ENCODE measurements at regions of chrX and their contacts with region 1.

Region 1: GRCh38 chrX:29662759-29663503 is 552.4 kb upstream of the MAGEB2 start:
- DNase-seq: peak; percentile 95
- ATAC-seq: peak; percentile 84
- H3K4me3 ChIP-seq: peak overlapping the region; percentile 45
- H3K27ac ChIP-seq: peak overlapping the region; percentile 100
- H3K4me1 ChIP-seq: peaks cover 44% of the 10 kb centered on the region
- H3K27me3 ChIP-seq: no peaks in the 10 kb centered on the region
- CTCF ChIP-seq: no peak

Region 2: DNA sequence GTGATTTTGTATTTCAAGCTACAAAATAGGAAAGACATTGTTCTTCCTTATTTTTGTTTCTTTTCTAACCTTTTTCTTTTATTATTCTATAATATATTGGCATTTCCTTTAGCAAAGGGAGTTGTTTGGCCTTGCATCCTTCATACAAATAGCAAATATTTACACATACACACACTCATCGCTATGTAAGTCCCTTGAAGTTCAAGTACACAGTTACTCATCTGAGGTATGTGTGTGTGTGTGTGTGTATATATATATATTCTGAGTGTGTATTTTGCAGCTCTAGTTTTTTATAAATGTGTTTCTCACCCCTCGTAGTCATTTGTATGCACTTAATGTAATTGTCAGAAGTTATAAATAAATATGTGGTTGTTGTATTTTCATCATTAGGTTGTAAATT is 172.3 kb before region 1 on chrX:
- CTCF ChIA-PET with region 1: no interaction called
- POLR2A ChIA-PET with region 1: no interaction called
- intact Hi-C with region 1: loop called (anchors 1 kb)
- DNase-seq: peak; percentile 64
- ATAC-seq: peak; percentile 95
- H3K4me3 ChIP-seq: no peak overlapping the region
- H3K27ac ChIP-seq: peak overlapping the region; percentile 62
- H3K4me1 ChIP-seq: peaks cover 25% of the 10 kb centered on the region
- H3K27me3 ChIP-seq: no peaks in the 10 kb centered on the region
- CTCF ChIP-seq: no peak

Region 3: GRCh38 chrX:29699239-29699638 is 36.3 kb after region 1 on chrX:
- CTCF ChIA-PET with region 1: no interaction called
- POLR2A ChIA-PET with region 1: no interaction called
- intact Hi-C with region 1: no loop called
- DNase-seq: peak; percentile 17
- ATAC-seq: peak; percentile 53
- H3K4me3 ChIP-seq: no peak overlapping the region
- H3K27ac ChIP-seq: no peak overlapping the region
- H3K4me1 ChIP-seq: no peaks in the 10 kb centered on the region
- H3K27me3 ChIP-seq: no peaks in the 10 kb centered on the region
- CTCF ChIP-seq: no peak